ENCODE measurements at regions of chr13 and their contacts with region 1.

Region 1: DNA sequence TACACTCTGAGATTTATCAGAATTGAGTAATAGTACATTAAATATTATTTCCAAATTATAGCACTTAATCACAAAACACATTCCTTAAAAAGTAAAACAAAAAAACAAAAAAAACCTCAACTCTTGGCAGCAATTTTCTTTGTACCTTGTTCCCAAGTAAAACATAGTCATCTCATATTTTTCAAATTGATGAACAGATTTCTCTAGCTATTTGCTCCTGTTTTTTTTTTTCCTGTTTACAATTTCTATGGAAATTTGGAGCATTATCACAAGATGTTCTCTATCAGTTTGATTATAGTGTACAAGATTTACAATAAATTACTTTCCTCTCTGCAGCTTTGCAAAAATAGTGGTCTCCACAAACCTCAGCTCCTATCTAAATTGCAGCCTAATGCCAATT is 25.0 kb downstream of the RFC3 start:
- DNase-seq: no peak
- CTCF ChIP-seq: no peak

Region 2: GRCh38 chr13:33832872-33833271 is 10.1 kb before region 1 on chr13:
- CTCF ChIA-PET with region 1: interaction called, 11 read pairs
- POLR2A ChIA-PET with region 1: no interaction called
- DNase-seq: no peak
- CTCF ChIP-seq: no peak

Measured in GM10248 (cell line).